PC-9 (cell line): ENCODE measurements at regions of chr12 and their contacts with region 1.

Region 1: DNA sequence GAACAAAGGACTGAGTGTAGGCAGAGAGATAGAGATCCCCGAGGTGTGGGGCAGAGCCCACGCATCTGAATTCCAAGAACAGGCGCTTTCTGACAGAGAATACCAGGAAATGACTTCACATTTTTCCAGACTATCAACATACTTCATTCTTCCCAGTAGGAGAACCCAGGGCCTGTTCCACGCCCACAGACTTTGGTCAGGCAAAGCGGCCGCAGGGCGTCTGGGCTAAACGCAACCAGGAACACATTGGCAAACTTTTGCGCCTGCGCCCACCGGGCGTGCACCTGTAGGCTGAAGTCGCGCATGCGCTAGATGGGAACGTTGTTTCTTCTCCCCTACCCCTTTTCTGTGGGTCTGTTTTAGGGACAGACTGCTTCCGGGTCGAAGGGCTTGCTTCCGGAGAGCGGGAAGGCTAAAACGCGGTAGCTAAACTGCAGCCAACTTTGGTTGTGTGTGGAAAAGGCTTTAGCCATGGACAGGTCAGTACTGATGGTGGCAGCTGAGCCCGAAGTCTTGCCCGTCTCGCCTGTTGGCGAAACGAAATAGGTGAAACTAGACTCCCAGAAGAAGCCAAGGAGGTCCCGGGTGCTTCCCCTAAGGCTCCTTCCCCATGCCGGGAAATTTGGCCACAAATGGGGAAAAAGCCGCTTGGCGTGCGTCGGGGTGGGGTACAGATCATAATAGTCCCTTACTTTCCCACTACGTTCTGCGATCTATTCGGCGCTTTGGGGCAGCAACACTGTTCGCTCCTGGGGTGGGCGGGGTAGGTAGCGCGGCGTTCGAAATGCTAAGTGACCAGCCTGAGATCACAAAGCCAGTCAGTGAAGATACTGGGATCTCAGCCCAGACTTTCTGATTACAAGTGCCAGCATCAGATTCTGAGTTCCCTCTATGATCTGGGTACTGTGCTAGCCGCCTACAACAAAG is at the start of gene NUP107:
- DNase-seq: peak; percentile 97 to 99
- H3K4me3 ChIP-seq: peak within 1 kb of the TSS; percentile 97
- H3K27ac ChIP-seq: peak within 1 kb of the TSS; percentile 87
- H3K4me1 ChIP-seq: peaks cover 24% of the 10 kb centered on the region
- H3K27me3 ChIP-seq: no peaks in the 10 kb centered on the region
- CTCF ChIP-seq: no peak
- total RNA-seq, gene NUP107: 75.7 and 84.9 TPM in 2 replicates

Region 2: GRCh38 chr12:67370979-67371378 is 1315.9 kb before region 1 on chr12:
- CTCF ChIA-PET with region 1: no interaction called
- POLR2A ChIA-PET with region 1: no interaction called
- intact Hi-C with region 1: no loop called
- DNase-seq: no peak
- H3K4me3 ChIP-seq: no peak overlapping the region
- H3K27ac ChIP-seq: no peak overlapping the region
- H3K4me1 ChIP-seq: no peaks in the 10 kb centered on the region
- H3K27me3 ChIP-seq: no peaks in the 10 kb centered on the region
- CTCF ChIP-seq: no peak

Region 3: GRCh38 chr12:68223083-68223747 is 463.6 kb before region 1 on chr12:
- CTCF ChIA-PET with region 1: no interaction called
- POLR2A ChIA-PET with region 1: no interaction called
- intact Hi-C with region 1: loop called (anchors 5 kb)
- DNase-seq: peak; percentile 62 to 70
- H3K4me3 ChIP-seq: no peak overlapping the region
- H3K27ac ChIP-seq: no peak overlapping the region
- H3K4me1 ChIP-seq: 0 out of 2 replicates have a peak, but pooled peaks cover 11% of the 10 kb centered on the region
- H3K27me3 ChIP-seq: no peaks in the 10 kb centered on the region
- CTCF ChIP-seq: peak; percentile 89

Region 4: GRCh38 chr12:68331869-68332727 is 354.8 kb before region 1 on chr12 and contains the start of gene MDM1:
- CTCF ChIA-PET with region 1: no interaction called
- POLR2A ChIA-PET with region 1: no interaction called
- intact Hi-C with region 1: loop called (anchors 10 kb)
- DNase-seq: peak; percentile 94 to 95
- H3K4me3 ChIP-seq: peak within 1 kb of the TSS; percentile 78
- H3K27ac ChIP-seq: no peak within 1 kb of the TSS
- H3K4me1 ChIP-seq: peaks cover 15% of the 10 kb centered on the region; the same call in 1 of the 2 replicates
- H3K27me3 ChIP-seq: no peaks in the 10 kb centered on the region
- CTCF ChIP-seq: no peak
- total RNA-seq, gene MDM1: 9.5 and 14.0 TPM in 2 replicates

Region 5: GRCh38 chr12:68358532-68359485 is 328.0 kb before region 1 on chr12:
- CTCF ChIA-PET with region 1: no interaction called
- POLR2A ChIA-PET with region 1: interaction called, 10 read pairs
- intact Hi-C with region 1: loop called (anchors 2 kb)
- DNase-seq: peak; percentile 48 to 61
- H3K4me3 ChIP-seq: no peak overlapping the region
- H3K27ac ChIP-seq: no peak overlapping the region
- H3K4me1 ChIP-seq: peaks cover under 1% of the 10 kb centered on the region
- H3K27me3 ChIP-seq: no peaks in the 10 kb centered on the region
- CTCF ChIP-seq: peak; percentile 78

Region 6: GRCh38 chr12:68364893-68365725 is 321.7 kb before region 1 on chr12:
- CTCF ChIA-PET with region 1: no interaction called
- POLR2A ChIA-PET with region 1: no interaction called
- intact Hi-C with region 1: loop called (anchors 2 kb)
- DNase-seq: peak; percentile 93 to 95
- H3K4me3 ChIP-seq: peak overlapping the region; percentile 55
- H3K27ac ChIP-seq: peak overlapping the region; percentile 87
- H3K4me1 ChIP-seq: peaks cover 19% of the 10 kb centered on the region
- H3K27me3 ChIP-seq: no peaks in the 10 kb centered on the region
- CTCF ChIP-seq: no peak

Region 7: GRCh38 chr12:68733661-68734071 is 46.8 kb after region 1 on chr12:
- CTCF ChIA-PET with region 1: no interaction called
- POLR2A ChIA-PET with region 1: no interaction called
- intact Hi-C with region 1: no loop called
- DNase-seq: no peak
- H3K4me3 ChIP-seq: no peak overlapping the region
- H3K27ac ChIP-seq: no peak overlapping the region
- H3K4me1 ChIP-seq: no peaks in the 10 kb centered on the region
- H3K27me3 ChIP-seq: no peaks in the 10 kb centered on the region
- CTCF ChIP-seq: no peak

Region 8: GRCh38 chr12:68807576-68808387 is 120.9 kb after region 1 on chr12 and contains the start of gene MDM2:
- CTCF ChIA-PET with region 1: no interaction called
- POLR2A ChIA-PET with region 1: no interaction called
- intact Hi-C with region 1: loop called (anchors 5 kb)
- DNase-seq: peak; percentile 76 to 97
- H3K4me3 ChIP-seq: peak within 1 kb of the TSS; percentile 84
- H3K27ac ChIP-seq: peak within 1 kb of the TSS; percentile 92
- H3K4me1 ChIP-seq: peaks cover 20% of the 10 kb centered on the region
- H3K27me3 ChIP-seq: no peaks in the 10 kb centered on the region
- CTCF ChIP-seq: peak; percentile 72
- total RNA-seq, gene MDM2: 74.3 and 95.2 TPM in 2 replicates